ENCODE measurements at regions of chr14 and their contacts with region 1.

Region 1: DNA sequence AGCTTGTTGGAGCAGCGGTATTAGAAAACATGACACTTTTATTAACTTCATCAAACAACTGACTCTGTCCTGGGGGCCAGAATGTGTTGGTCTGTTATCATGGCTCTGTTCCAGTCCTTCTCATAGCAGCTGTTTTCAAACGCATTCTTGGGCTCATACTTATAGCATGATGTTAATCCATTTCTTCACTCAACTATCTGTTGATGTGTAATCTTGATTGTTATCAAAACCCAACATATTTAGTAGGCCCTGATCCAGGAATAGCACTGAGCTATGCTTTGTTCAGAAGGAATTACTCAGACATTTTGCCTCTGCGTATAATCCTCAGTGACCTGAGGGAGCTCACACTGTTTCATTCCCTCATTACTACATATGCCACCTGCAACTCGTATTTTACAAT is 315.9 kb downstream of the BMP4 start:
- DNase-seq: no peak
- H3K4me3 ChIP-seq: no peak overlapping the region
- H3K27ac ChIP-seq: no peak overlapping the region
- H3K4me1 ChIP-seq: no peaks in the 10 kb centered on the region
- H3K27me3 ChIP-seq: no peaks in the 10 kb centered on the region
- CTCF ChIP-seq: no peak
- POLR2A ChIP-seq: no peak

Region 2: DNA sequence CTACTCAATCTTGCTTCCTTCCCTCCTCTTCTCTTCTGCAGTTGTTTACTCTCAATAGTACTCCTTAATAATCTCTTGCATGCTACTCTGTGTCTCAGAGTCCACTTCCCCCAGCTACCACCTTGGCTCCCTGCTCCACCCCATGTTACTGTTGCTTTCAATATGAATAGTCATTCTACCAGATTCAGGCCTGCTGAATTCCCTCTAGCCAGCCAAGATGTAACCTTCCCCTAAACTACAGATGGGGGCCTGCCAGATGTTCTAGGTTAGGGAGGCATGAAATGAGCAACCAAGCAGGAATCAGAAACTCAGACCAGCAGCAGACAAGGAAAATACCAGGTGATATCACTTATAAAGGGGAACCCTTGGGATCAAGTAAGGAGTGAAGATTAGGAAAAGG is 95.5 kb before region 1 on chr14:
- intact Hi-C with region 1: no loop called
- DNase-seq: no peak
- H3K4me3 ChIP-seq: no peak overlapping the region
- H3K27ac ChIP-seq: no peak overlapping the region
- H3K4me1 ChIP-seq: peaks cover 4% of the 10 kb centered on the region
- H3K27me3 ChIP-seq: no peaks in the 10 kb centered on the region
- CTCF ChIP-seq: no peak
- POLR2A ChIP-seq: no peak

Region 3: DNA sequence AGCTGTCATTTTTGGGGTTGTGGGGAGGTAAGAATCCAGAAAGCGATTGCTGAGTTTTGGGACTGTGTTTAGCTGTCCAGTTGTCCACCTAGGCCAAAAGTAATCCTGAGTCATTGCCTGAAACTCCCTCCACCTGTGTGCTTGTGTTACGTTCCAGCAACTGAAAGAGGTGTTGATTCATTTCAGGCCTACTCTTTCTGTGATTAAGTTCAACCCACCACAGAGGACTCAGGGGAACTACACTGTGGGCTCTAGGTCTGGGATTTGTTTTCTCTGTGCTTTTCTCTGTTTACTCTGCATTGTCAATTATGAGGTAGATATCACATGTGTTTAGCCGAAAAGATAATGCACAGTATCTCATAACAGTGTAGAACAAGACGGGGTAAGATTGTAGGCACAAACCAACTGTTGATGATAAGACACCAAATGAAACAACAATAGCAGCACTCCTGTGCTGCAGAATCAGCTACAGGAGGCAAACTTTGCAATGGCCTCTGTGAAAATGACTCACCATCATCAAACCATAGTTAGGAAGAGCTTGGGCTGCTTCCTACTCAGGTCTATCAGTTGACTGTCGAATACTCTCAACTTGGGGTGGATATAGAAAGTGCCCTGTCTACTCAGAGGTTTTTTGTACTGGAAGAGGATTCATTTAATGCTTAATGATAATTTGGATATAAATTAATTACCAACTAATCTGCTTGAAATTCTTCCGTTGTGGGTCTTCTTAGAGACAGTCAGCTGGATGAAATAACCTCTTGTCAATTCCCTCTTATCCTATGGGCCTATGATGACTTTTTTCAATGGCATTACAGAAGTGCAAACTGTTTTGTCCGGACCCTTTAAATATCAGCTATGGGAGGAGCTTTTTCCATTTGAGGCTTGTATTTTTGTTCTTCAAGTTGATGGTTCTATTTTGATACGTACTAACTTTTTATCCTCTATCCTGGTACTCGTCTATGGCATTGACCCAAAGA is 70.0 kb before region 1 on chr14:
- intact Hi-C with region 1: no loop called
- DNase-seq: no peak
- H3K4me3 ChIP-seq: no peak overlapping the region
- H3K27ac ChIP-seq: no peak overlapping the region
- H3K4me1 ChIP-seq: no peaks in the 10 kb centered on the region
- H3K27me3 ChIP-seq: no peaks in the 10 kb centered on the region
- CTCF ChIP-seq: no peak
- POLR2A ChIP-seq: no peak

Region 4: GRCh38 chr14:53619691-53620231 is 20.9 kb before region 1 on chr14:
- intact Hi-C with region 1: loop called (anchors 2 kb)
- DNase-seq: no peak
- H3K4me3 ChIP-seq: no peak overlapping the region
- H3K27ac ChIP-seq: no peak overlapping the region
- H3K4me1 ChIP-seq: no peaks in the 10 kb centered on the region
- H3K27me3 ChIP-seq: no peaks in the 10 kb centered on the region
- CTCF ChIP-seq: no peak
- POLR2A ChIP-seq: no peak